ENCODE measurements at regions of chr14 and their contacts with region 1.

Region 1: DNA sequence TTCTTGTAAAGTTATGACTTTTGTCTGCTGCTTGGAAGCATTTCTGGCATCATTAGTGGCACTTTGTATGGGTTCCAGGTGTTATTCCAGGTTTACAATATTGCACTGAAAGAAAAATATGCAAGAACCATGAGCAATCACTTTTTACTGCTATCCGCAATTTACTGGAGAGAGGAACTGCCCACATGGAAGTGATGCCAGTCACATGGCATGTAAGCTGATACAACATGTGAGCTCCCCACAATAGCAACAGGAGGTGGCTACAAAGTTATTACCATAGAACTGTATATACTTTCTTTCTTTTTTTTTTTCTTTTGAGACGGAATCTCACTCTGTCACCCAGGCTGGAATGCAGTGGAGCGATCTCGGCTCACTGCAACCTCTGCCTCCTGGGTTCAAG is 1012.1 kb downstream of the BCL11B start:
- DNase-seq: no peak
- ATAC-seq: no peak
- H3K4me3 ChIP-seq: no peak overlapping the region
- H3K27ac ChIP-seq: no peak overlapping the region
- H3K4me1 ChIP-seq: no peaks in the 10 kb centered on the region
- H3K27me3 ChIP-seq: no peaks in the 10 kb centered on the region
- CTCF ChIP-seq: no peak
- POLR2A ChIP-seq: no peak
- RAD21 ChIP-seq: no peak

Region 2: DNA sequence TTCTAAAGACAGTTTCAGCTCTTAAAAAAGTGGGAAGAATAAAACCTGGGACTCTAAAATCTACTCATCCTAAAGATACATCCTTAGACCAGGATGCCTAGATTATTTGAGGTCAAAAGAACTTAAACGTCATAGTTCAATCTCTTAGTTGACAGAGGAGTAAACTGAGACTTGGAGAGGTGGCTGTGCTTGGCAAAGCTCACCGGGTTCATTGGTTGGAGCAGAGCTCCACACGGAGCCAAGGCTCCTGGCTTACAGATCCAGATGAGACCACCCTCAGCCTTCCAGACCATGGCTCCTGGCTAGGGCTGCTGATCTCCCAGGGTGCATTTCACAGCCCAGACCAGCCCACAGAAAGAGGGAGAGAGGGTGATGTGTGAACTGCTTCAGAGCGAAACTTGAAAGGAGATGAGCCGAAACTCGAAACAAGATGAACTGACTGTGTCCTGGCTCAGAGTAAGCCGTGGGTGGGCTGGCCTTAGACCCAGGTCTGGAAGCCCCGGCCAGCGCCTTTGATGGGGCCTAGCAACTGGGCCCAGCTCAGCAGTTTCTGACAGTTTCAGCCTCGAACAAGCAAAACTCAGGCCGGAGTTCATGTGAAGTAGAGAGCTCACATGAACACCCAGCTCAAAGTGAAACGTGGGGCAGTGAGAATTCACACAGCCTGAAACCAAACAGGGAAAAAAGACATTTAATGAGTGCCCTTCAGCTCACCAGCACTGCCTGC is 32.7 kb before region 1 on chr14:
- CTCF ChIA-PET with region 1: no interaction called
- POLR2A ChIA-PET with region 1: interaction called, 18 read pairs
- dilution Hi-C with region 1: no loop called
- in situ Hi-C with region 1: no loop called
- intact Hi-C with region 1: no loop called
- DNase-seq: no peak
- ATAC-seq: no peak
- H3K4me3 ChIP-seq: no peak overlapping the region
- H3K27ac ChIP-seq: no peak overlapping the region
- H3K4me1 ChIP-seq: no peaks in the 10 kb centered on the region
- H3K27me3 ChIP-seq: no peaks in the 10 kb centered on the region
- CTCF ChIP-seq: no peak
- POLR2A ChIP-seq: no peak
- RAD21 ChIP-seq: no peak